Caki2 (cell line): ENCODE measurements at regions of chr2 and their contacts with region 1.

Region 1: GRCh38 chr2:20642055-20642971 is 8.6 kb downstream of the HS1BP3 start:
- DNase-seq: peak; percentile 71

Region 2: GRCh38 chr2:20446917-20447436 is 195.3 kb before region 1 on chr2 and contains the start of gene RHOB:
- in situ Hi-C with region 1: loop called (anchors 25 kb)
- DNase-seq: peak; percentile 98
- total RNA-seq, gene RHOB: 151 and 158 TPM in 2 replicates

Region 3: DNA sequence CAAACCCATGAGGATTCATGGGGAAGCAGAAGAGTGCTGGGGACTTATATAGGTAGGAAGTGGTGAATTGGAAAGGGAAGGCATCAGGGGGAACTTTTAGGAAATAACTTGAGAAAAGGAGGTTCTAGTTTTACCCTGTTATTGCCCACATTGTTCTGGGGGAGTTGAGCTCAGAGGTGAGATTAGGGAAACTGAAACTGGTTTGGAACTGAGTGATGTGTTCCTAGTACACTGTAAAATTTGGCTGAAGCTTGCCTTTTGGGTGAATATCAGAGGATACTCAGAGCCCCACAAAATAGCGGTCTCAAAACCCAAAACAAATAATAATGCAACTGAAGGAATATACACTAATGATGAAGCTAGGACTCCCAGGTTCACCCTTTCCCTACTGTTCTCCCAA is 441.2 kb after region 1 on chr2:
- in situ Hi-C with region 1: no loop called
- DNase-seq: no peak